Activated CD8-positive, alpha-beta memory T cell treated with anti-CD3 and anti-CD28 coated beads, Interleukin-2, amount 10 ng/mL, durations not matched to agents 7 days and 5 days (primary cell): ENCODE measurements at regions of chr22 and their contacts with region 1.

Region 1: DNA sequence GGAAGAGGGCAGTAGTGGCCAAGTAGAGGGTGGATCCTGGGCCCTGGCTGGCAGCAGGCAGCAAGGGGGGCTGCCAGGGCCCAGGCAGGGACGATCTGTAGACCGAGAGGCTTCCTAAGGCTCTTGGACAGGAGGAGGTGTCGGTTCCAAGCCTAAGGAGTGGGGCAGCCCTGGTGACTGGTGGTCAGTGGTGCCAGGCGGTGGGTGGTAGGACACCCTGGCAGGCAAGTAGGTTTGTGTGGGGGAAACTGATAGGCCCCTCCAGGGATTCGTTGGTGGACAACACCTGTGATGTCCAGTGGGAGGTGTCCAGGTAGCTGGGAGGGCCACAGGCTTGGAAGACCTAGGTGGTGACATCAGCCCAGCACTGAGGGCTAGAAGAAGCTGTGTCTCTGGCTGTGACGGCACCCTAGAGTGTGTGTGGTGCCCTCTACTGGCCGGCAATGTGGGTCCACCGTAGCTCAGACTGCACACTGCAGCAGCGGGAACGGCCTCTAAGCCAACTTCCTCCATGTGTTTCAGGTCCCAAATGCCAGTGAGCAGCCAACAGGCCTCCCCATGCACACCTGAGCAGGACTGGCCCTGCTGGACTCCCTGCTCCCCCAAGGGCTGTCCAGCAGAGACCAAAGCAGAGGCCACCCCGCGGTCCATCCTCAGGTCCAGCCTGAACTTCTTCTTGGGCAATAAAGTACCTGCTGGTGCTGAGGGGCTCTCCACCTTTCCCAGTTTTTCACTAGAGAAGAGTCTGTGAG is 9.4 kb upstream of the SAMM50 start:
- DNase-seq: peak; percentile 80
- ATAC-seq: peak; percentile 98
- H3K4me3 Mint-ChIP-seq: no peak overlapping the region
- H3K27ac Mint-ChIP-seq: no peak overlapping the region
- H3K4me1 Mint-ChIP-seq: no peaks in the 10 kb centered on the region
- H3K27me3 Mint-ChIP-seq: peaks cover 4% of the 10 kb centered on the region

Region 2: DNA sequence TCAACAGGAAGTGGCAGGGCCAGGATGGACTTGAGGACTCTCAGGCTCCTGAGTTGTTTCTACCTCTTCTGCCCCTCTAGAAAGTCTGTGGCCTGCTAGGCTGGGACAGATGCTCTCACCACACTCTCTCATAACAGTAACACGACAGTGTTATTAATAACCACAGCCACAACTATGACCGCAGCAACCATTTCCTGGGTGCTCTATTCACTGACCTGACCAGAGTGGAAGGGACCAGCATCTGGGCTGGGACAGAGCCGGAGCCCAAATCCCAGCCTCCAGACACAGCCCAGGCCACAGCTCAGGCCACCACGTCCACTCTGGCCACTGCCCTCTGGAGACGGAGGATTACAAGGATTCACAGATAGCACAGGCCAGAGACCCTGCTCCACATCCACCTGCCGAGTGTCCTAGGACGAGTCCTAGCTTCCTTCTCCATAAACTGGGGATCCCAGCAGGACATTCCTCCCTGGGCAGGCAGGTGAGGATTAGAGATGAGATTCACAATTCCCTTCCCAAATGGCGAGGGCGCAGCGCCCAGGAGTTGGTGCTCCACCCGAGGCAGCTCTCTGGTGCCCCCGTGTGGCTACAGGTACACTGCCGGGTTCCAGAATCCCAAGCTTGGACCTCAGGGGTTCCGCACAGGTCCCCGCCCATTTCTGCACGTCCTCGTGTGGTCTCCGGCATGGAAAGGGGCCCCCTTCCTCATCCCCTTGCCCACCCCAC is 61.0 kb before region 1 on chr22:
- CTCF ChIA-PET with region 1: interaction called, 47 read pairs
- DNase-seq: peak; percentile 65
- ATAC-seq: peak; percentile 55
- H3K4me3 Mint-ChIP-seq: no peak overlapping the region
- H3K27ac Mint-ChIP-seq: no peak overlapping the region
- H3K4me1 Mint-ChIP-seq: peaks cover 11% of the 10 kb centered on the region
- H3K27me3 Mint-ChIP-seq: peaks cover 16% of the 10 kb centered on the region